ENCODE measurements at regions of chr5 and their contacts with region 1.

Region 1: DNA sequence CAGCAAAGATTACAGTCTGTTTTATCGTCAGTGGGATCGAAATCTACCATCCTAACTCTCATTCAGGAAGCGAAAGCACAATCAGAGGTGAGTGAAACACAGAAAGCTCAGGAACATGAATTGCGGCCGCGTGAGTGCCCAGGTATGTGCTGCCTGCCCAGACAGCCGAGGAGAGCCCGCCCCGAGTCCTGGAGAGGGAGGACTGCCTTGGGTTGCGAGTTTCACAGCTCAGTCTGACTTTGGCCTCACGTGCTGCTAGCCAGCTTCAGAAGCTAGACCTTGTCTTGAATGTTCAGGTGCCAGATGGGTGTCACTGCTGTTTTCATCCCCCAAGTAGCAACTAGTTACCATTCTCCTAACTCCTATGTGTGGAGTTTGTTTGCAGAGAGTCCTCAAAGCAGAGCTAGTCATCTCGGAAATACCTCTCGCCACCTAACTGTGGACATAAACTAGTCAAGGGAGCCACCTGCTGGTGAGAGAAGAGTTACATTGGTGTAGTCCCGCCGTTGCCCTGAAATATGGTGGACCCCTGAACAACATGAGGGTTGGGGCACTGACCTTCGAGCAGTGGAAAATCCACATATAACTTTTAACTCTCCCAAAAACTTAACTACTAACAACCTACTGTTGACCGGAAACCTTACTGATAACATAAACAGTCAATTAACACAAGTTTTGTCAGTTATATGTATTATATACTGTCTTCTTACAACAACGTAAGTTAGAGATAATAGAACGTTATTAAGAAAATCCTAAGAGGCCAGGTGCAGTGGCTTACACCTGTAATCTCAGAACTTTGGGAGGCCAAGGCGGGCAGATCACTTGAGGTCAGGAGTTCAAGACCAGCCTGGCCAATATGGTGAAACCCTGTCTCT is 80.9 kb downstream of the GOLPH3 start:
- DNase-seq: no peak

Region 2: GRCh38 chr5:31581498-31582099 is 511.6 kb before region 1 on chr5:
- intact Hi-C with region 1: loop called (anchors 5 kb)
- DNase-seq: no peak

Region 3: DNA sequence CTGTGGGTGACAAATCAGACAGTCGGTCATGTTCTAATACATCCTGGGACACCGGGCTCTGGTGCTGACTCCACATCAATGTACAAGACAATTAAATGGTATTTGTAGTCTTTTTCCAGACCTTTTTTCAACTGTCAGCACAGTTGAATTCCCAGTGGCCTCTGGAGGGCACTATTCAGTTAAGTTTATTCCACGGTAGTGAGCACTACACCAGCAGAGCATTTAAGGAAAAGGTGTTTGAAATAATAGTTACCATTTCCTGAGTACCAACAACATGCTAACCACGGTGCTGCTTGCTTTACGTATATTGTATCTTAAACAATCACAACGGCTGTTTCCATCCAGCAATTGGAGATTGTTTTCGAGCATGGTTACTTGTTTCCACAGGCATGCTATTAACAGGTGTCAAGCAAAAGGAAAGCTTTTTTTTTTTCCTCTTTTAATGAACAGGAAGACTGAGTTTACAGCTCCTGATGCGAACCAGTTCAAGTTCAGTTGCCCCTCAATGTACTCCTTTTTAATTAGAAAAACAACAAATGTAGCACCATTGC is 267.6 kb before region 1 on chr5:
- intact Hi-C with region 1: loop called (anchors 5 kb)
- DNase-seq: no peak

Measured in cardiac septum (tissue), 1 donor.